GM13976 (cell line): ENCODE measurements at regions of chr18 and their contacts with region 1.

Region 1: DNA sequence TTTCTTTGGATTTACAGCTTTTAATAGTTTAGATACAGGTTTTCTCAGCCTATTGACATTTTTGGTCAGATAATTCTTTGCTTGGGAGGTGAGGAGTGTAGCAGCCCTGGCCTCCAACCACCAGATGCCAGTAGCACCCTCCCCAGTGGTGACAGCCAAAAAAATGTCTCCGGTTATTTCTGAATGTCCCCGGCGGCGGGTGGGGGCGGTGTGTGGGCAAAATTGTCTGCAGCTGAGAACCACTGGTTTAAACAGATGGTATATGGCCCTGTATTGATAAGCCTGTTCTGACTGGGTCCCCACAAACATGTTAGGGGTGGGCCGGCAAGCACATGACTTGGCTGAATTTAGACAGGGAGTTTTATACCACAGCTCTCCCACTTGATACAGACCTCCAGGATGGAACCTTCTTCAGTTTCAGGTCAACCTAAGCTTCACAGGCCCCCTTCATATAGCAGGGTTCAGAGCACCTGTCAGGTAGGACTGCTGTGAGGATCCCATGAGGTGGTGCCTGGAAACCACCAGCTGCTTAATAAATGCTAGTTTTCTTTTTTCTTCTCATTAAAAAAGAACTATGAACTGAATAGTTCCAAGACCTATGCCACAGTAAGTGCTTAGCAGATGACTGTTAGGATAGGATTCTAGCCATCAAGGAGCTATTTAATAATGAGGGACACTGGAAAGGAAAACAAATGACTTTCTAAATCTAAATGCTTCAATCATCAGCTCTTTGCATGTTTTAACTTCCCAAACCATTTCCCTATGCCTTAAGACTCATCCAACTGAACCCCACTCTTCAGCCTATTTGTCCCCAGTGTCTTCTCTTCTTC is 18.1 kb downstream of the LPIN2 start:
- DNase-seq: peak; percentile 70
- CTCF ChIP-seq: peak; percentile 71

Region 2: DNA sequence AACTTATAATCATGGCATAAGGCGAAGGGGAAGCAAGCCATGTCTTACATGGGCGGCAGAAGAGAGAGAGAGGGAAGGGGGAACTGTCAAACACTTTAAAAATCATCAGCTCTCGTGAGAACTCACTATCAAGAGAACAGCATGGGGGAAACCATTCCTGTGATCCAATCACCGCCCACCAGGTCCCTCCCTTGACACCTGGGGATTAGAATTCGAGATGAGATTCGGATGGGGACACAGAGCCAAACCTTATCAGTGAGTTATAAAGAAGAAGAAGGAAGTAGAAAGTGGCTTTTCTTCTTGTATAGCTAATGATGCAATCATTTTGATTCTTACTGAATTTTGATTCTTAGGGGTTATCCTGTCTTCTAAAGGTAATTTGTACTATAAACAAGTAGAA is 287.9 kb before region 1 on chr18:
- in situ Hi-C with region 1: no loop called
- DNase-seq: no peak
- CTCF ChIP-seq: no peak

Region 3: GRCh38 chr18:2758309-2758708 is 236.5 kb before region 1 on chr18:
- in situ Hi-C with region 1: loop called (anchors 25 kb)
- DNase-seq: no peak
- CTCF ChIP-seq: no peak

Region 4: GRCh38 chr18:3245853-3246634 is 251.2 kb after region 1 on chr18:
- in situ Hi-C with region 1: loop called (anchors 10 kb)
- DNase-seq: peak; percentile 76
- CTCF ChIP-seq: peak; percentile 96

Region 5: DNA sequence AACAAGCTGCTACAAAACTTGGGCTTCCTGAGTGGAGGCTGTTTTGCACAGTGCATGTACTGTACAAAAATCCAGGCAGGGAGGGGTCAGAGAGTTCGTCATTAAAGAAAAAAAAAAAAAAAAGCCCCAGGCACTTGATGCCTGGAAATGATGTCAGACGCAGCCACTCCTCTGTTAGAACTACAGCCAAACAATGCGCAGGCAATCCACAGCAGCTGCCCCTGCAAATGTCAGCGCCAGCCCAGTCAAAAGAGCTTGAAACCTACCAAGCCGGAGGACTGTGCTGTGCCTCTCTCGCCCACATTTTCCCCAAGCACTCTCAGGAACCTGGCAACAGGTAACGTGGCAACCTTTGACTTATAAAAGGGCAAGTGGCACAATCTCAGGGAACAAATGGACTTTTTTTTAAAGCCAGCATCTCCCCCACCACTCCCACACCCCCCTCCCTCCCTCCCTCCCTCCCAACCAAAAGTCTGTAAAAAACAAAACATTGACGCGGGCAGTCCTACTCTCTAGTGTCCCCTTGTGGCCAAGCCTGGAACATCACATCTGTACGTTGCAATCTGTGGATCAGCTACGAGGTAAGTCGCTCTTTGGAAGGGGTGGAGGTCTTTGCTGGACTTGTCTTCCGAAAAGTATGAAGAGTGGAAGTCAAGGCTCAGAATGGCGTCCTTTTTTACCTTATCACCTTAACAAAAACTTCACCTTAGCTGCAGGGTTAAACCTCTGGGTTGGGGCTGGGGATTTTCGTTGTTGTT is 599.3 kb after region 1 on chr18:
- in situ Hi-C with region 1: loop called (anchors 25 kb)
- DNase-seq: peak; percentile 73
- CTCF ChIP-seq: peak; percentile 85